Mammary epithelial cell (primary cell): ENCODE measurements at regions of chr4 and their contacts with region 1.

Region 1: DNA sequence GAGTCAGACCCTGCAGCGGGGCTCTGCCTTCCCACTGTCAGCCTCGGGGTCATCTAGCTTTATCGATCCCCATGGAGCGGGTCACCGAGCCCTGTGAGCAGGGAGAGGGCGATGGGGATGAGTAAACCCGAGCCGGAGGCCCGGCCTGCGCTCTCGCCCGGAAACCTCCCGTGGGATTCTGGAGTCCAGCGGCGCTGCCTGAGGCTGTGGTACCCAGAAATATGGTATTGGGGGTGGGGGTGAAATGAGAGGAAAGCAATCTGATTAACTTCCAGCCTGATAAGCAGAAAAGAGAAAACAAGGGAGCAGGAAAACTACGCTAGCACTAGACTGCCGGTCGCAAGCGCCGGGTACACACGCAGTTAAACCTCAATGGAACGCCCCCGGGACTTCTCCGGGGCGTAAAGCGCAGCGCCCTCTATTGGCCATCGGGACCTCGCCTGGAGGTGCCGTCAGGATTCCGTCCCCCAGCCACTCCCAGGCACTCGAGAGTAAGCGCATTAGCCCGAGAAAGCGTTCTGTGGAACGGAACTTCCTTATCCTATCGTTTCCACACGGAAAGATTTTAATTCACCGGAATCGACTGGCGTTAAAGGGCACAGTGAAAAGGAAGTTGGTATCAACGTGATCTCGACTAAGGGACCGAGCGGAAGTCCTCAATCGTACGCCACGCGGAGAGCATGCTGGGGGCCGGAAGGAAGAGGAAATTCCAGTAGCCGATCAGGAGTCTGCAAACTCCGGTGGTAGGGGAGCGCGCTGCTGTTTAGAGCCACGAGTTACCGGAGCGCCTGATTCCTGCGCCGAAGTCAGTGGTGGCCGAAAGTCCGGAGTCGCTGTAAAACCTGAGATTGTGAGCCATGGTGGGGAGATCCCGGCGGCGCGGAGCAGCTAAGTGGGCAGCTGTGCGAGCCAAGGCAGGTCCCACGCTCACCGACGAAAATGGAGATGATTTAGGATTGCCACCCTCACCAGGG is at the start of gene UTP3:
- DNase-seq: peak; percentile 99
- H3K4me3 ChIP-seq: peak within 1 kb of the TSS; percentile 63 to 80 (median 75)
- H3K27ac ChIP-seq: peak within 1 kb of the TSS; percentile 70
- H3K4me1 ChIP-seq: peaks cover 19% of the 10 kb centered on the region
- H3K27me3 ChIP-seq: no peaks in the 10 kb centered on the region
- CTCF ChIP-seq: peak; percentile 95 to 96
- total RNA-seq, gene UTP3: 14.3 to 40.0 TPM

Region 2: GRCh38 chr4:70651864-70652506 is 36.1 kb before region 1 on chr4:
- CTCF ChIA-PET with region 1: no interaction called
- dilution Hi-C with region 1: no loop called
- in situ Hi-C with region 1: no loop called
- intact Hi-C with region 1: loop called (anchors 1 kb)
- DNase-seq: peak; percentile 29
- H3K4me3 ChIP-seq: no peak overlapping the region
- H3K27ac ChIP-seq: no peak overlapping the region
- H3K4me1 ChIP-seq: no peaks in the 10 kb centered on the region
- H3K27me3 ChIP-seq: no peaks in the 10 kb centered on the region
- CTCF ChIP-seq: peak; percentile 51 to 56

Region 3: DNA sequence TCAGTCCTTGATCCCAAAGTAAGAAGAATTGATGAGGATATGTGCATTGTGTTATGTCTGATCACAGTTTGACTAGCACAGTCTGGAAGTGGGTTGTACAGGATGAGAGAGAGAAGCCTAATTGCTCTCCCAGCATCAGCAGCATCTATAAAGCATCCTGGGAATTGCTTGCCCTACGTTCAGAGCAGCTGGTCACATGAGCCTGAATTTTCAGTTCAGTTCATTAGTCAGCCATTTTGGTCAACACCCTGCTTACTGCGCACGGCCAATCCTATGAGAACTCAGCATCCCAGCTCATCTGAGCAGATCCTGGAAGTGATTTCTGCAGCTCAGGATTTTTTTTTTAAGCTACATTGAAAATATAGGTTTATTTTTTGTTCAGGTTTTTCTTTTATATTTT is 33.6 kb after region 1 on chr4 and contains the start of gene RUFY3:
- CTCF ChIA-PET with region 1: no interaction called
- dilution Hi-C with region 1: no loop called
- in situ Hi-C with region 1: no loop called
- intact Hi-C with region 1: loop called (anchors 1 kb)
- DNase-seq: no peak
- H3K4me3 ChIP-seq: no peak within 1 kb of the TSS
- H3K27ac ChIP-seq: no peak within 1 kb of the TSS
- H3K4me1 ChIP-seq: peaks cover 13% of the 10 kb centered on the region
- H3K27me3 ChIP-seq: no peaks in the 10 kb centered on the region
- CTCF ChIP-seq: no peak
- total RNA-seq, gene RUFY3: 36.2 to 40.1 TPM

Region 4: GRCh38 chr4:70993181-70994068 is 305.3 kb after region 1 on chr4 and contains the start of gene DCK:
- CTCF ChIA-PET with region 1: no interaction called
- dilution Hi-C with region 1: no loop called
- in situ Hi-C with region 1: loop called in 1 of 2 experiments (anchors 25 kb)
- intact Hi-C with region 1: no loop called
- DNase-seq: peak; percentile 91
- H3K4me3 ChIP-seq: peak within 1 kb of the TSS; percentile 81 to 95 (median 91)
- H3K27ac ChIP-seq: peak within 1 kb of the TSS; percentile 76
- H3K4me1 ChIP-seq: peaks cover 7% of the 10 kb centered on the region
- H3K27me3 ChIP-seq: no peaks in the 10 kb centered on the region
- CTCF ChIP-seq: no peak
- total RNA-seq, gene DCK: 10.0 to 16.0 TPM